Caco-2 (cell line): ENCODE measurements at regions of chr1 and their contacts with region 1.

Region 1: DNA sequence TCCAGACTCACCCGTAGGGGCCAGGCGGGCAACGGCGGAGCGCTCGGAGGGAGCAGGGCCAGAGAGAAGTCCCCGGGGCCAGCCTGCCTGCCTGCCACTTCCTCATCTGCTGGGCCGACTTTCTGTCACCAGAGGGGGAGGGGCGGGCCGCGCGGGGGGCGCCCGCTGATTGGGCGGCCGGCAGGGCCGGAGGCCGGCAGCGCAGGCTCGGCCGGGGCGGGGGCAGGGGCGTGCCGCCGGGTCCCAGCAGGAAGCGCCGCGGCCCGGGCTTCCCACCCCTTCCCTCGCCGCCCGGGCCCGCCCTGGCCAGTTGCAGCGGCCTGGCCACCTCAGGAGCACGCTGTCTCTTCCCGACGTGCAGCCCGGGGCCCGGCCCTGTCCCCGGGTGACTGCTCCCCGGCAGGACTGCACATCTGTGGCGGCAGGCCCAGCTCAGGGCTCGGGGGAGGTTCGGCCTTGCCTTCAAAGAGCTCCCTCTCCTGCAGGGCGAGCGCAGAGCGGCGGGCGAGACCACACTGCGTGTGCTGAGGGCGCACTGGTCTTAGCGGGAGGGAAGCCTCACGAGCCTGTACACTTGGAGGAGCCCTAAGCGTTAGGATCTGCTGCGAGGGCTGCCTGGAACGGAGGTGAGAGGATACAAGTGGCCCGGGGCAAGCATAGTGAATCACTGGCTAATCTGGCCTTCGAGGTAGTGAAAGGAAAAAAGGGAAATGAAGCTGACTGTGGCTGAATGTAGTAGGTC is at the start of gene ELOVL1:
- DNase-seq: peak; percentile 89 to 93
- H3K4me3 ChIP-seq: peak within 1 kb of the TSS; percentile 76
- H3K4me3 Mint-ChIP-seq: peak within 1 kb of the TSS; percentile 79
- H3K27ac Mint-ChIP-seq: peak within 1 kb of the TSS; percentile 84
- H3K4me1 ChIP-seq: peaks cover 35% of the 10 kb centered on the region
- H3K4me1 Mint-ChIP-seq: peaks cover 25% of the 10 kb centered on the region
- H3K27me3 ChIP-seq: no peaks in the 10 kb centered on the region
- H3K27me3 Mint-ChIP-seq: no peaks in the 10 kb centered on the region
- CTCF ChIP-seq: peak in 1 of 2 experiments; percentile 15
- total RNA-seq, gene ELOVL1: 66.8 and 67.1 TPM in 2 replicates

Region 2: GRCh38 chr1:42877380-42877779 is 490.7 kb before region 1 on chr1:
- CTCF ChIA-PET with region 1: no interaction called
- POLR2A ChIA-PET with region 1: no interaction called
- intact Hi-C with region 1: no loop called
- DNase-seq: no peak
- H3K4me3 ChIP-seq: no peak overlapping the region
- H3K4me3 Mint-ChIP-seq: no peak overlapping the region
- H3K27ac Mint-ChIP-seq: no peak overlapping the region
- H3K4me1 ChIP-seq: no peaks in the 10 kb centered on the region
- H3K4me1 Mint-ChIP-seq: no peaks in the 10 kb centered on the region
- H3K27me3 ChIP-seq: no peaks in the 10 kb centered on the region
- H3K27me3 Mint-ChIP-seq: peaks cover 6% of the 10 kb centered on the region
- CTCF ChIP-seq: no peak

Region 3: GRCh38 chr1:43285269-43285990 is 82.6 kb before region 1 on chr1 and contains the start of gene C1orf210:
- CTCF ChIA-PET with region 1: interaction called, 4 read pairs
- POLR2A ChIA-PET with region 1: interaction called, 11 read pairs
- intact Hi-C with region 1: no loop called
- DNase-seq: peak; percentile 93 to 94
- H3K4me3 ChIP-seq: peak within 1 kb of the TSS; percentile 53
- H3K4me3 Mint-ChIP-seq: peak within 1 kb of the TSS; percentile 92
- H3K27ac Mint-ChIP-seq: peak within 1 kb of the TSS; percentile 93
- H3K4me1 ChIP-seq: peaks cover 20% of the 10 kb centered on the region
- H3K4me1 Mint-ChIP-seq: peaks cover 15% of the 10 kb centered on the region
- H3K27me3 ChIP-seq: no peaks in the 10 kb centered on the region
- H3K27me3 Mint-ChIP-seq: no peaks in the 10 kb centered on the region
- CTCF ChIP-seq: peak in 1 of 2 experiments; percentile 71
- total RNA-seq, gene C1orf210: 7.8 and 9.6 TPM in 2 replicates

Region 4: DNA sequence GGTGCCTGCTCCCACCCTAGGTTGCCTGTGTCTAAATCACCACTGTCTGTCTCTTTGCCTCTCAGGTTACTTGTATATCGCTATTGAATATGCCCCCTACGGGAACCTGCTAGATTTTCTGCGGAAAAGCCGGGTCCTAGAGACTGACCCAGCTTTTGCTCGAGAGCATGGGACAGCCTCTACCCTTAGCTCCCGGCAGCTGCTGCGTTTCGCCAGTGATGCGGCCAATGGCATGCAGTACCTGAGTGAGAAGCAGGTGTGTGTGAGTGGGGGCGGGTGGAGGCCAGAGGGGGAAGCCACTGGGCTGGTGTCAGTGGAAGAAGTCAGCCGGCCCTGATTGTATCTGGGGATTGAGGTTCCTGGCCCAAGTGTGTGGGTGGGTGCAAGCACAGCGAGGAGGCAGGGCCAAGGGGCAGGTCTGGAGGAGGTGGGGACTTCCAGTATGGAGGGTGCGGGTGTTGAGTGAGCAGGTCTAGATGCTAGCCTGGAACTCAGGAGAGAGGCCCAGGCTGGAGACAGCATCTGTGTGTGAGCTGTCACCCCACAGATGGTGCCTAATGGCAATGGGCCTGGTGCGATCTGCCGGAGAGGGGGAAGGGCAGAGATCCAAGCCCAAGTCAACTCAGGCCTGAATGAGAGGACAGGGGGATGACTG is 50.1 kb before region 1 on chr1:
- CTCF ChIA-PET with region 1: no interaction called
- POLR2A ChIA-PET with region 1: no interaction called
- intact Hi-C with region 1: no loop called
- DNase-seq: no peak
- H3K4me3 ChIP-seq: no peak overlapping the region
- H3K4me3 Mint-ChIP-seq: no peak overlapping the region
- H3K27ac Mint-ChIP-seq: no peak overlapping the region
- H3K4me1 ChIP-seq: no peaks in the 10 kb centered on the region
- H3K4me1 Mint-ChIP-seq: no peaks in the 10 kb centered on the region
- H3K27me3 ChIP-seq: no peaks in the 10 kb centered on the region
- H3K27me3 Mint-ChIP-seq: no peaks in the 10 kb centered on the region
- CTCF ChIP-seq: no peak

Region 5: DNA sequence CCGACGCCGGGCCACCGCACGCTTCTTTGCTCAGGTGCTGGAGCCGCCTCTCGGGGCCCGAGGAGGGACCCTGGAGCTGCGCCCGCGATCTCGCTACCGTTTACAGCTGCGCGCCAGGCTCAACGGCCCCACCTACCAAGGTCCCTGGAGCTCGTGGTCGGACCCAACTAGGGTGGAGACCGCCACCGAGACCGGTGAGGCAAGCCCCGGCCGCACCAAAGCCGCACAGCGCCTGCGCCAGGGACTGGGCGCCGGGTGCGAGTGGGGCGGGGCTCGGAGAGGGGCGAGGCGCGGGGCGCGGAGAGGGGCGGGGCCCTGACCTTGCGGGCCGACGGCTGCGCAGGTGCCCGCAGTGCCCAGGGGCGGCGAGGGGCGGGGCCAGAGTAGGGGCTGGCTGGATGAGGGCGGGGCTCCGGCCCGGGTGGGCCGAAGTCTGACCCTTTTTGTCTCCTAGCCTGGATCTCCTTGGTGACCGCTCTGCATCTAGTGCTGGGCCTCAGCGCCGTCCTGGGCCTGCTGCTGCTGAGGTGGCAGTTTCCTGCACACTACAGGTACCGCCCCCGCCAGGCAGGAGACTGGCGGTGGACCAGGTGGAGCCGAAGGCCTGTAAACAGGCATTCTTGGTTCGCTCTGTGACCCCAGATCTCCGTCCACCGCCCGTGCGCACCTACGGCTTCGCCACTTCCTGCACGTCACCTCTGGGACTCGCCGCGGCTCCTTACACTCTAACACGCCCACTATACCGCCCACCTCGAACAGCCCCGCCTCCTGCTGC is 19.1 kb before region 1 on chr1:
- CTCF ChIA-PET with region 1: interaction called, 3 read pairs
- POLR2A ChIA-PET with region 1: interaction called, 11 read pairs
- intact Hi-C with region 1: no loop called
- DNase-seq: peak; percentile 93 to 94
- H3K4me3 ChIP-seq: peak overlapping the region; percentile 48
- H3K4me3 Mint-ChIP-seq: peak overlapping the region; percentile 74
- H3K27ac Mint-ChIP-seq: peak overlapping the region; percentile 96
- H3K4me1 ChIP-seq: no peaks in the 10 kb centered on the region; the same call in 1 of the 2 replicates
- H3K4me1 Mint-ChIP-seq: peaks cover 23% of the 10 kb centered on the region
- H3K27me3 ChIP-seq: no peaks in the 10 kb centered on the region
- H3K27me3 Mint-ChIP-seq: no peaks in the 10 kb centered on the region
- CTCF ChIP-seq: no peak

Region 6: GRCh38 chr1:43383449-43383848 is 15.4 kb after region 1 on chr1:
- CTCF ChIA-PET with region 1: no interaction called
- POLR2A ChIA-PET with region 1: interaction called, 10 read pairs
- intact Hi-C with region 1: no loop called
- DNase-seq: no peak
- H3K4me3 ChIP-seq: no peak overlapping the region
- H3K4me3 Mint-ChIP-seq: no peak overlapping the region
- H3K27ac Mint-ChIP-seq: no peak overlapping the region
- H3K4me1 ChIP-seq: no peaks in the 10 kb centered on the region
- H3K4me1 Mint-ChIP-seq: peaks cover 6% of the 10 kb centered on the region
- H3K27me3 ChIP-seq: no peaks in the 10 kb centered on the region
- H3K27me3 Mint-ChIP-seq: no peaks in the 10 kb centered on the region
- CTCF ChIP-seq: no peak

Region 7: DNA sequence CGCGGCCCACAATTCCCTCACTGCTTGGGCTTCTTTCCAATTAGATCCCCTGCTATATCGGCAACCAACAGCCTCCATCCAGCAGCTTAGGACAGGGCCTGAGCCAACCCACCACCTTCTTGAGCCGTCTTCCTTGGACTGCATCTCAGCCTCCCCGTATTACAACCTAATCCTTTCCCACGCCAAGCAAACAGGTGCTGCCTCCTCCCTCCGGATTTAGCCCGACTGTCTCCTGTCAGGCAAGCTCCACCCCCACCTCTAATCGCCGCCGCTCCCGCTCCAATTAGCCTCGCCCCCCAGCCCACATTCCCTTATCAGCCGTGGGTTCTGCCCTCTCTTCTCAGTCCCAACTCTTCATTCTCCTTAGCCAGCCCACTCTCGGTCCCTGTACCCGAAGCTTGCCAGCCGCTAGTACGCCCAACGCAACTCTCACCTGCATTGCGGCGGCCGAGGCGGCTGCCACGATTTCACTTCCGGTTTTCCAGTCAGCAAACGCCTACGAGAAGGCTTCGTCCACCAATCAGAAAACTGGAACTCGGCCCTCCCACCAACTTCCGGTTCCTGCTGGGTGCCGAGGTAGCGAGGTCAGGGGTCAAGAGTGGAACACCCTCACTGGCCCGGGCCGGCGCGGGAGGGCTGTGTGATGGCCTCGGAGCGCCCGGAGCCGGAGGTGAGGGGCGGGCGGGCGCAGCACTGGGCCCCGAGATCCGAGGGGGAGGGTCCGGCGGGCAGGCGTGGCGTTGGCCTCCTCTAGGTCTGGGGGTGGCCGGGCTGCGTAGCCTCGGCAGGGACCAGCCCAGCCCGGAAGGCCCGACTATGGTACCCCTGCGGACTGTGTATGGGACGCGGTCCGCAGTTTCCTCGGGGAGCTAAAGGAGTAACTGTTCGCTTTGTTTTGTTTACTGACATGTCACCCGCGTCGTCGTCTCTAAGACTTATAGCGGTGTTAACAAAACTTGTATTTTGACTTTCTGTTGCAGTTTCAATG is 21.5 kb after region 1 on chr1 and contains the starts of genes MED8 and SZT2:
- CTCF ChIA-PET with region 1: interaction called, 3 read pairs
- POLR2A ChIA-PET with region 1: interaction called, 10 read pairs
- intact Hi-C with region 1: loop called (anchors 1 kb)
- DNase-seq: peak; percentile 96
- H3K4me3 ChIP-seq: peak within 1 kb of the TSS; percentile 59
- H3K4me3 Mint-ChIP-seq: peak within 1 kb of the TSS; percentile 88
- H3K27ac Mint-ChIP-seq: peak within 1 kb of the TSS; percentile 95
- H3K4me1 ChIP-seq: no peaks in the 10 kb centered on the region
- H3K4me1 Mint-ChIP-seq: peaks cover 15% of the 10 kb centered on the region
- H3K27me3 ChIP-seq: no peaks in the 10 kb centered on the region
- H3K27me3 Mint-ChIP-seq: no peaks in the 10 kb centered on the region
- CTCF ChIP-seq: no peak
- total RNA-seq, gene MED8: 33.3 and 35.8 TPM in 2 replicates
- total RNA-seq, gene SZT2: 29.0 and 31.6 TPM in 2 replicates

Region 8: GRCh38 chr1:43414634-43415223 is 46.7 kb after region 1 on chr1:
- CTCF ChIA-PET with region 1: interaction called, 10 read pairs
- POLR2A ChIA-PET with region 1: no interaction called
- intact Hi-C with region 1: loop called (anchors 1 kb)
- DNase-seq: peak; percentile 68 to 76
- H3K4me3 ChIP-seq: no peak overlapping the region
- H3K4me3 Mint-ChIP-seq: no peak overlapping the region
- H3K27ac Mint-ChIP-seq: no peak overlapping the region
- H3K4me1 ChIP-seq: no peaks in the 10 kb centered on the region
- H3K4me1 Mint-ChIP-seq: no peaks in the 10 kb centered on the region
- H3K27me3 ChIP-seq: no peaks in the 10 kb centered on the region
- H3K27me3 Mint-ChIP-seq: no peaks in the 10 kb centered on the region
- CTCF ChIP-seq: peak; percentile 63 to 66